HEK293 (cell line): ENCODE measurements at regions of chr1 and their contacts with region 1.

Region 1: GRCh38 chr1:145891587-145892485 is 6.2 kb upstream of the ANKRD35 start:
- H3K4me3 ChIP-seq: no peak overlapping the region
- H3K27ac ChIP-seq: peak overlapping the region; percentile 66
- H3K4me1 ChIP-seq: peaks cover 15% of the 10 kb centered on the region
- CTCF ChIP-seq: peak; percentile 95; the same call in 1 of the 2 replicates

Region 2: GRCh38 chr1:145720554-145720876 is 171.3 kb before region 1 on chr1:
- CTCF ChIA-PET with region 1: no interaction called
- POLR2A ChIA-PET with region 1: no interaction called
- H3K4me3 ChIP-seq: no peak overlapping the region
- H3K27ac ChIP-seq: no peak overlapping the region
- H3K4me1 ChIP-seq: no peaks in the 10 kb centered on the region
- CTCF ChIP-seq: no peak

Region 3: DNA sequence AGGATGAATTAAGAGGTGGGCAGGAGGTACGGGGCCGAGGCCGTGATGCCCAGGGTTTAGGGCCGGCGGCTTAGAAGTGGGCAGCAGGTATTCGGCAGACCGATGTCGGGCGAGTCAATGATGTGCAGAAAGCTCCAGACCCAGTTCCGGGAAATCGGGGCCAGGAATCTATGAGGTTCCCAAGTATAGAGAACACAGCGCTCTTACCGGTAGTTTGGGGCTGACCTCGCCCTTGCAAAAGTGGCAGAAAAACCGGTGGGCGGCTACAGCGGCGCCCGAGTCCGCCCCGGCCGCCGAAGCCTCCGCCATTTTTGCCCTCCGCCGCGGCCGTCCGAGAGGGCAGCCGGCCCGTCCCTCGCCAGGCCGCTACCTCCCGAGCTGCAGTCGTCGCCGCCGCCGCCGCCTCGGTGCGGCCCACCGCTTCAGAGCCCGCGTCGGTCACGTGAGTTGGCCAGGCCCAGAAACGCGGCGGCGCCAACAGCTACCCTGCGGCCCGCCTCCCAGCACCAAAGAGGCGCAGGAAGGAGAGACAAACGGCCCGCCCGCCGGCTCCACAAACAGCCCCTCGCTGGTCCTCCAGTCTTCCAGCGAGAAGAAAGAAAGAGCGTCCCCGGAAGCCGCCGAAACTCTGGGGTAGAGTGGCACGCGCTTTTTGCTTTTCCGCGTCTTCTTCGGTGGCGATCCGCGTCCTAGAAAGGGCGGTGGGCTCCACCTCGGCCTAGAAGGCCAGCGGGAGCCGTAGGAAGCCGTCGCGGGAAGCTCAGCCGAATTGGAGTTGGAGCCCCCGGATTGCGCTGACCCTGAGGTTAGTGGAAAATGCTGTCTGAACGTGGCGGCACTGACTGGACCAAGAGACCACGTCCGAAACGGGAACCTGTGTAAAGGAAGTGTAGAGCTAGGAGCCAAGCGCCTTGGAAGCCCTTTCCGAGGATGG is 68.0 kb before region 1 on chr1 and contains the starts of genes POLR3C and RNF115:
- CTCF ChIA-PET with region 1: no interaction called
- POLR2A ChIA-PET with region 1: no interaction called
- H3K4me3 ChIP-seq: peak within 1 kb of the TSS; percentile 92
- H3K27ac ChIP-seq: peak within 1 kb of the TSS; percentile 81
- H3K4me1 ChIP-seq: no peaks in the 10 kb centered on the region
- CTCF ChIP-seq: peak; percentile 17; the same call in 1 of the 2 replicates

Region 4: DNA sequence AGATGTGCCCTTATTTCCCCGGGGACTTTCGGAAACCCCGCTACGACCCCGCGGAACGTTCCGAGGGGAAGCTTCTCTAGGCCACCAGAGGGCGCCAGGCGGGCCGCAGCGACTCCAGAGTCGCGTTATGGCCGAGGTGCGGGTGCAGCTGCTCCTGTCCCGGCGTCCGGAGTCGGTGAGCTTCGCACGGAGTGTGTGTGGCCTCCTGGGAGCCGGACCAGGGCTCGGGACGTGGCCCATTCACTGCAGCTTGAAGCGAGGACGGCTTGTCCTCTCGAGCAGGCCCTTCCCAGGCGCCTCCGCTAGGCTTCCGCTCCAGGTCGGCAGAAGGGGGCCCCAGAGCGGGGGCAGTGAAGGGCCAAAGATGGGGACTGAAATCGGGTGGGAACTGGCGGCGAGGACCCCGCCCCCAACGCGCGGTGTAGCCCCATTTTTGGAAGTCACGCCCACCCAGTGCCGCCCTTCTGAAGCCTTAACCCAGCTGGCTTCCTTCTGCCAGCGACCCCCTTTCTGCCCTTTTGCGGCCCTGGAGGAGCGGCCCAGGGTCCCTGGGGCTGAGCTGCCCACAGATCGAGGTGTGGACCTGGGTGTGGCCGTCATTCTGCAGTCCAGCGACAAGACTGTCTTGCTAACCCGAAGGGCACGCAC is 46.2 kb before region 1 on chr1 and contains the start of gene NUDT17:
- CTCF ChIA-PET with region 1: interaction called, 49 read pairs
- POLR2A ChIA-PET with region 1: interaction called, 7 read pairs
- H3K4me3 ChIP-seq: peak within 1 kb of the TSS; percentile 60
- H3K27ac ChIP-seq: peak within 1 kb of the TSS; percentile 40; the same call in 1 of the 2 replicates
- H3K4me1 ChIP-seq: 0 out of 2 replicates have a peak, but pooled peaks cover 3% of the 10 kb centered on the region
- CTCF ChIP-seq: peak; percentile 96

Region 5: GRCh38 chr1:145879775-145880174 is 12.1 kb before region 1 on chr1:
- CTCF ChIA-PET with region 1: interaction called, 70 read pairs
- POLR2A ChIA-PET with region 1: interaction called, 5 read pairs
- H3K4me3 ChIP-seq: no peak overlapping the region
- H3K27ac ChIP-seq: no peak overlapping the region
- H3K4me1 ChIP-seq: no peaks in the 10 kb centered on the region
- CTCF ChIP-seq: no peak

Region 6: DNA sequence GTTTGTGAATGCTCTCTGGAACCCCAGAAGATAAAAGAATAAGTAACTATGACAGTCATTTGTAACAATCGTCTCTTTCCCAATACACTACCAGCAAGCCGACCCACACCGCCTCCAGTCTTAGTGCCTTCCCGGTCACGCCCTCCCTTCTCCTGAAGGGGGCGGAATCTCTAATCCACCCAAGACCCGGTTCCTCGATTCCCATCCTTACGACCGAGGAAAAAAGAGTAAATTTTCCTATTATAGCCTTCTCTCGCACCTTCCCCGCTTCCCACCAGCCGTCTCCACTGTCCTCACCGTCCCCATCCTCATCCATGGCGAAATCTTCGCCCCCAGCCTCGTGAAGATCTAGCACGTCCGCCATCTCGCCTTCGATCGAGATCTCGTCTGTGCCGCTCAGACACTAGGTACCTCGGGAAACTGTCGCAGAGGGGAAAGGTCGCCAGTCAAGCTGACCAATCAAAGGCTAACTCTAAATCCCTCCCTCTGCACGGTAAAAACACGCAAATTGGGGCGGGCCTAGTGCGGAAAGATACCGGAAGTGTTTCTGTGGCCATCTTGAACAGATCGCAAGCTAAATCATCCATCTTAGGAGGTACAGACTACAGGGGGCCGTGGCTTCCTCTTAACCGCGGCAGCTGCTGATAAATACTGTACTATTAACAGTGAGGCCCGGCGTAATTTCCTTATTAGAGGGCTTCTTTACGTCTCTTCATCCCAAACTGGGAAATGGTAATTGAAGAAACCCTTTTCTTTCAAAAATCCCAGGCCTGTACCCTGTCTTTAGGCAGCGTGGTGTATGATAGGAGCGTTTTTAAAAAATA is 35.4 kb after region 1 on chr1 and contains the start of gene RBM8A:
- CTCF ChIA-PET with region 1: interaction called, 9 read pairs
- POLR2A ChIA-PET with region 1: interaction called, 13 read pairs
- H3K4me3 ChIP-seq: peak within 1 kb of the TSS; percentile 83
- H3K27ac ChIP-seq: peak within 1 kb of the TSS; percentile 59
- H3K4me1 ChIP-seq: no peaks in the 10 kb centered on the region
- CTCF ChIP-seq: peak; percentile 98

Region 7: GRCh38 chr1:145963995-145964901 is 72.4 kb after region 1 on chr1 and contains the starts of genes ANKRD34A and POLR3GL:
- CTCF ChIA-PET with region 1: interaction called, 15 read pairs
- POLR2A ChIA-PET with region 1: interaction called, 9 read pairs
- H3K4me3 ChIP-seq: peak within 1 kb of the TSS; percentile 70
- H3K27ac ChIP-seq: peak within 1 kb of the TSS; percentile 16; the same call in 1 of the 2 replicates
- H3K4me1 ChIP-seq: peaks cover 9% of the 10 kb centered on the region
- CTCF ChIP-seq: no peak

Region 8: GRCh38 chr1:146007506-146008133 is 115.8 kb after region 1 on chr1:
- CTCF ChIA-PET with region 1: interaction called, 29 read pairs
- POLR2A ChIA-PET with region 1: interaction called, 4 read pairs
- H3K4me3 ChIP-seq: no peak overlapping the region
- H3K27ac ChIP-seq: no peak overlapping the region
- H3K4me1 ChIP-seq: no peaks in the 10 kb centered on the region
- CTCF ChIP-seq: no peak

Region 9: DNA sequence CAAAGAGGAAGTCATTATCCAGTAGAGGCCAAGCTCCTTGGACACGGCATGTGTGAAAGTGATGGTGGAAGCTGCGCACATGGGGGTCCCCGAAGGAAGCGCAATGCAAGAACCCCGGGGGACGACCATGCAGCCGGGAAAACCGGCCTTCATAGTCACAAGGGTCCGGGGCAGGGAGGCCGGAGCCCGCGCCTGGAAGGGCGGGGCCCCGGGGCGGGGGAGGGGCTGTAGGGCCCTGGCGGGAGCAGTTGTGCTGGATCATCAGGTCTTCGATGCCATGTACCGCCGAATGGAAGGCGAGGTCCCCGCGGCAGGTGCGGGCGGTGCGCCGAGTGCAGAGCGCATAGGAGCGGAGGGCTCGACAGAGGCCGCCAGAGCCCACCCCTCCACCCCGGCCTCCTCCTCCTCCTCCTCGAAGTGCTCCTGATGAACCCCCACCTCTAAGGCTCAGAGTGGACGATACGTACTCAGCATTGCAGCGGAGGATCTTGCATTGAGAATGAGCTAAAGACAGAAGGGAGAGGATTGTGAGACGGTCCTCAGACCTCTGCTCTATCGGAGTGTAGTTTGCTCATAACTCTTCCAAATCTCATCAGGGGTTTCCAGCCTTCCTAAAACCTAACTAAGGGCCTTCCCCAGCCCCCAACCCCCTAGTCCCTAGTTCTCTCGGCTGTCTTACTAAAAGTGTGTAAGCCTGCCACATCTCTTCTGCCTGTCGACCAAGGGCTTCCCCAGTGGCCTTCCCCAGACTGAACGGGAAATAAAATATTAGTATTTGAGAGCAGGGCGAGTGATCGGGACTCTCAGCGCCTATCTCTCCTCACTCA is 127.6 kb after region 1 on chr1:
- CTCF ChIA-PET with region 1: interaction called, 29 read pairs
- POLR2A ChIA-PET with region 1: no interaction called
- H3K4me3 ChIP-seq: no peak overlapping the region
- H3K27ac ChIP-seq: no peak overlapping the region
- H3K4me1 ChIP-seq: no peaks in the 10 kb centered on the region
- CTCF ChIP-seq: no peak